ENCODE measurements at regions of chr1 and their contacts with region 1.

Region 1: DNA sequence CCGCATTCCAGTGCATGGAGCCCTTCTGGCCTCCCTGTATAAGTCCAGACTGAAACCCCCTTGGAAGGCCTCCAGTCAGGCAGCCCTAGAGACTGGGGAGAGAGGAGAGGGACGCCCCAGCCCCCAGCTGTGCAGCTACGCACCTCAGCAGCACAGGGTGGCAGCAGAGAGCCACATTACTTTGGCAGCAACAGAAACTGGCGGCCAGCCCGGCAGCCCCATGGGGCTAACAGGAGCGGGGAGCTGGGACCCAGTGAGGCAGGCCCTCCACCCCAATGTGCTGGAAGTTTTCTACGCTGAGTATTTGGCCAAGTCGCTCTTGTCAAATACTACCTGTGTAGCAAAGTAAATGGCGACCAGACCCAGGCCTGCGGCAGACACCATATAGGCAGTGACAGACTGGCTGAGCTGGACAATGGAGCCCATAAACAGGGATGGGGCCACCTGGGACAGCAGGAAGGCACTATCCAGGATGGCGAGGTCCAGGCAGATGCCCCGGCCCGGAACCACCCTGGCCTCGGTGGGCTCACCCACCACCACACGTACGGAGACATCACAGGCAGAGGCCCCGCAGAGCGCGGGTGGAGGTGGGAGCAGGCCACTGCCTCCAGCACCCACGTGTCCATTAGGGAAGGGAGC is 21.2 kb downstream of the SLC45A3 start:
- DNase-seq: peak; percentile 85
- H3K4me3 Mint-ChIP-seq: no peak overlapping the region
- H3K27ac Mint-ChIP-seq: no peak overlapping the region
- H3K4me1 Mint-ChIP-seq: no peaks in the 10 kb centered on the region
- H3K27me3 Mint-ChIP-seq: peaks cover 2% of the 10 kb centered on the region

Region 2: DNA sequence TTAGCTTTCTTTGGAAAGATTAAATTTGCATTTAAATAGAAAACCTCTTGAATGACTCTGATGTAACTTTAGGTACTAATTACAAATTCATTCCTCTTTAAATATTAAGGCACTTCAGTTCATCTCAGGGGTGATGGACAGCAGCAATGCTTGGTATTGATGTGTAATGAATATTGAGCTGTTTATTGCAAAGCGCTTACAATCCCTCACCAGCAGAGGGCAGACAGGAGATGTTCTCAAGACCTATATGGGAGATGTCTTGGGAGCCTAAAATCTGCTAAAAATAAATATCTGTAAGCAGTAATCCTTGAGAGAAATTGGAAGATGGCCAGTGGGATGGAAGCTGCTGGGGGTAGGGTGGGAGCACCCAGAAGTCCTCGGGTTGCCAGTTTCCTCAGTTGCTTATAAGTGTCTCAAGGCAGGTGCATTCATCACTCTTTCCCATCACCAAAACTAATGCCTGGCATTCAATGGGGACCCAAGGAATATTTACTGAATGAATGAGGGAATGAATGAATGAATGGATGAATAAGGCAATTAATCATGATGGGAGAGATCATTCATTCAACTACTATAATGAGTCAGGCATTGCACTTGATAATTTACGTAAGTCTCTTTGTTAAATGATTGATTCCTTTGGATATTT is 304.7 kb before region 1 on chr1:
- CTCF ChIA-PET with region 1: interaction called, 12 read pairs
- POLR2A ChIA-PET with region 1: no interaction called
- intact Hi-C with region 1: no loop called
- DNase-seq: peak; percentile 68
- H3K4me3 Mint-ChIP-seq: no peak overlapping the region
- H3K27ac Mint-ChIP-seq: no peak overlapping the region
- H3K4me1 Mint-ChIP-seq: no peaks in the 10 kb centered on the region
- H3K27me3 Mint-ChIP-seq: peaks cover 13% of the 10 kb centered on the region

Region 3: DNA sequence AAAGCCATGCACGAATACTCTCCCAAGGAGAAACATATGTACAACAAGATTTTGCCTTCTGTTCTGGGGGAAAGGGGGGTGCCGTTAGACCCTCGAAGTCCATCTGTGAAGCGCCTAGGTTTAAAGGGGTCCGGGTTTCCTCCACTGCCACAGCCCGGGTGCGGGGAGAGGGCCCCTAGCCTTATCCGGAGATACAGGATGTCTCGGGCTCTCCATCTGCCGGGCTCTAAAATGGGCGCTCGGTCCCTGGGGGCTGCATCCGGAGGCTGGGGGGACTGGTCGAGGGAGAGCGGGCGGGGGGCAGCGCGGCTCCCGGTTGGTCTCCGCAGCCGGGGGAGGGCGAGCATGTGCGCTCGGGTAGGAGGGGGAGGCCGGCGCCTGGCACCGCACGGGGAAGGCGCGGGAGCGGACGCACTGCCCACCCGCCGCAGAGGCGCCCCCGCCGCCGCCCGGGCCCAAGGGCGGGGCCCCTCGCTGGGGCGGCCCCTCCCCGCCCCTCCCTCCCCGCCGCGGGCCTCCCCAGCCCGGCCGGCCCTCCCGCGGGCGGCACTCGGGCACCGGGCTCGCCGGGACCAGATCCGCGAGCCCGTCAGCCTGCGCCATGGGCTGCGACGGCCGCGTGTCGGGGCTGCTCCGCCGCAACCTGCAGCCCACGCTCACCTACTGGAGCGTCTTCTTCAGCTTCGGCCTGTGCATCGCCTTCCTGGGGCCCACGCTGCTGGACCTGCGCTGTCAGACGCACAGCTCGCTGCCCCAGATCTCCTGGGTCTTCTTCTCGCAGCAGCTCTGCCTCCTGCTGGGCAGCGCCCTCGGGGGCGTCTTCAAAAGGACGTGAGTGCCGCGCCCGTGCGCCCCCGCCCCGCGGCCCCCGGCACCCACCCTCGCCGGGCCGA is 90.3 kb before region 1 on chr1:
- CTCF ChIA-PET with region 1: interaction called, 10 read pairs
- POLR2A ChIA-PET with region 1: no interaction called
- intact Hi-C with region 1: no loop called
- DNase-seq: no peak
- H3K4me3 Mint-ChIP-seq: no peak overlapping the region
- H3K27ac Mint-ChIP-seq: no peak overlapping the region
- H3K4me1 Mint-ChIP-seq: peaks cover 3% of the 10 kb centered on the region
- H3K27me3 Mint-ChIP-seq: peaks cover 23% of the 10 kb centered on the region

Region 4: DNA sequence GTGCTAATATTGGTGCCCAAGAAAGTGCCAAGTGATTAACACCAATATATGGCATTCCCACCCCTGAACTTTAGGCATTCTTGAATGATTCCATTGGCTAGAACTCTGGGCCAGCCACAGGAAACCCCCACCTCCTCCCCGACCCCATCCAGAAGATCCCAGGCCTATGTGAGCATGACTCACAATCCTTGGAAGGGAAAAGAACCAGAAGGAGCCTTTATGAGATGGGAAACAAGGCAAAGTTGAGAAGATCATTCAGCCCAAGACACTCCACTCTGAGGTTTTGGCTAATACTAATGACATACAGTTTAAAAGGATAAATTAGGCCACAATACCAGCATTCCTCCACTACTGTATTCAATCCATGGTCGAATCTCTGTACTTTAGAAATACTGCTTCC is 49.0 kb before region 1 on chr1:
- CTCF ChIA-PET with region 1: interaction called, 13 read pairs
- POLR2A ChIA-PET with region 1: no interaction called
- intact Hi-C with region 1: no loop called
- DNase-seq: no peak
- H3K4me3 Mint-ChIP-seq: no peak overlapping the region
- H3K27ac Mint-ChIP-seq: no peak overlapping the region
- H3K4me1 Mint-ChIP-seq: peaks cover 44% of the 10 kb centered on the region
- H3K27me3 Mint-ChIP-seq: no peaks in the 10 kb centered on the region

Region 5: DNA sequence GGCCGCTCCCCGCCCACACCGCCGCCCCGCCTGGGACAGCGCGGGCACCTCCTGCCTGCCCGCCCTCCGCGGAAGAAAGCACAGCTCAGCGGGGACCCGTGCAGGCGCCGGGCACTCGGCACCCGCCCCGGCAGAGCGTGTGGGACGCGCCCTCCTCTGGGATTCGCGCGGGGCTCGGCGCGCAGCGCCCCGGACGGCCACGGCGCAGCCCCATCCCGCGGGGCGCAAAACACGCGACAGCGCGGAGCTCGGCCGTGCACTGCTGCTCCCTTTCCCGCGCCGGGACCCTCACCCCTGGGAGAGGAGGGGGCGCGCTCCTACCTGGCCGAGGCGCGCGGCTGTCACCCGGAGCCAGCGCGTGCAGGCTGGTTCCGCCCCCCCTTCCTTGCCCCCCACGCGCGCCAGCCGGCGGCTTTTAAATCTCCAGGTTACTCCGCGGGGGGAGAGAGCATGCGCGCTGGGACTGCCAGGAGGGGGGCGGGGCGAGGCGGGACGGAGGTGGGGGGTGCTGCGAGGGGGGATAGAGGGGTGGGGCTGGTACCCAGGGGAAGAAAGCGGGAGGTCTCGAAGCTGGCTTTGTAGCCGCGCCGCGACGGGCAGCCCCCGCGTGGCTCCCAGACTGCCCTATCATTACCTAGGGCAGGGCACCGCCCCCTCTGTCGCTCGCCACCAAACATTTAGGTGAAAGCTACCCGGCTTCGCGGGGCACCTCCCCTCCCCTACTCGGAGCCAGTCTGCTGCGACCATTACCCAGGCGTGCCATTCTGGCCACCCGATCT is 21.2 kb after region 1 on chr1 and contains the start of gene SLC45A3:
- CTCF ChIA-PET with region 1: interaction called, 84 read pairs
- POLR2A ChIA-PET with region 1: no interaction called
- intact Hi-C with region 1: no loop called
- DNase-seq: peak; percentile 40
- H3K4me3 Mint-ChIP-seq: peak within 1 kb of the TSS; percentile 72
- H3K27ac Mint-ChIP-seq: no peak within 1 kb of the TSS
- H3K4me1 Mint-ChIP-seq: peaks cover 10% of the 10 kb centered on the region
- H3K27me3 Mint-ChIP-seq: peaks cover 13% of the 10 kb centered on the region
- total RNA-seq, gene SLC45A3: 0.55 to 0.56 TPM

Region 6: GRCh38 chr1:205726619-205727125 is 67.6 kb after region 1 on chr1:
- CTCF ChIA-PET with region 1: interaction called, 12 read pairs
- POLR2A ChIA-PET with region 1: no interaction called
- intact Hi-C with region 1: no loop called
- DNase-seq: no peak
- H3K4me3 Mint-ChIP-seq: no peak overlapping the region
- H3K27ac Mint-ChIP-seq: no peak overlapping the region
- H3K4me1 Mint-ChIP-seq: peaks cover 20% of the 10 kb centered on the region
- H3K27me3 Mint-ChIP-seq: no peaks in the 10 kb centered on the region

Region 7: DNA sequence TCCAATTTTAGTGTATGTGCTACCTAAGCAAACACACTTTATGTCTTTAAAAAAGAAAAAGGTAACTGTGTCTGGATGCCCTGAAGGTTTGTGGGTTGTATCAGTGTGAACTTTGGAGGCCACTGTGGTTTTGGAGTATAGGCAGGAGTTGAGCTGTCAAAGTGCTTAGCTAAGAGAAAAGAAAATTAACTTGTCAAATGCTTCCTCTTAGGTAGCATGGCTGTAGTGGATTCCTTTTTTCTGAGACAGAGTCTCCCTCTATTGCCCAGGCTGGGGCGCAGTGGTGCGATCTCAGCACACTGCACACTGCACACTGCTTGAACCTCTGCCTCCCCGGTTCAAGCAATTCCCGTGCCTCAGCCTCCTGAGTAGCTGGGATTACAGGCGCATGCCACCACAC is 165.1 kb after region 1 on chr1:
- CTCF ChIA-PET with region 1: no interaction called
- POLR2A ChIA-PET with region 1: no interaction called
- intact Hi-C with region 1: no loop called
- DNase-seq: no peak
- H3K4me3 Mint-ChIP-seq: no peak overlapping the region
- H3K27ac Mint-ChIP-seq: no peak overlapping the region
- H3K4me1 Mint-ChIP-seq: peaks cover 15% of the 10 kb centered on the region
- H3K27me3 Mint-ChIP-seq: no peaks in the 10 kb centered on the region

Region 8: GRCh38 chr1:205919026-205919746 is 260.1 kb after region 1 on chr1:
- CTCF ChIA-PET with region 1: interaction called, 16 read pairs
- POLR2A ChIA-PET with region 1: no interaction called
- intact Hi-C with region 1: no loop called
- DNase-seq: peak; percentile 84
- H3K4me3 Mint-ChIP-seq: no peak overlapping the region
- H3K27ac Mint-ChIP-seq: no peak overlapping the region
- H3K4me1 Mint-ChIP-seq: no peaks in the 10 kb centered on the region
- H3K27me3 Mint-ChIP-seq: no peaks in the 10 kb centered on the region

Region 9: GRCh38 chr1:205942631-205943159 is 283.6 kb after region 1 on chr1:
- CTCF ChIA-PET with region 1: no interaction called
- POLR2A ChIA-PET with region 1: no interaction called
- intact Hi-C with region 1: no loop called
- DNase-seq: no peak
- H3K4me3 Mint-ChIP-seq: no peak overlapping the region
- H3K27ac Mint-ChIP-seq: no peak overlapping the region
- H3K4me1 Mint-ChIP-seq: no peaks in the 10 kb centered on the region
- H3K27me3 Mint-ChIP-seq: peaks cover 42% of the 10 kb centered on the region

Measured in activated CD4-positive, alpha-beta memory T cell treated with anti-CD3 and anti-CD28 coated beads for 36 hours (primary cell).